Left cardiac atrium (tissue), 4 donors: ENCODE measurements at regions of chr4 and their contacts with region 1.

Region 1: DNA sequence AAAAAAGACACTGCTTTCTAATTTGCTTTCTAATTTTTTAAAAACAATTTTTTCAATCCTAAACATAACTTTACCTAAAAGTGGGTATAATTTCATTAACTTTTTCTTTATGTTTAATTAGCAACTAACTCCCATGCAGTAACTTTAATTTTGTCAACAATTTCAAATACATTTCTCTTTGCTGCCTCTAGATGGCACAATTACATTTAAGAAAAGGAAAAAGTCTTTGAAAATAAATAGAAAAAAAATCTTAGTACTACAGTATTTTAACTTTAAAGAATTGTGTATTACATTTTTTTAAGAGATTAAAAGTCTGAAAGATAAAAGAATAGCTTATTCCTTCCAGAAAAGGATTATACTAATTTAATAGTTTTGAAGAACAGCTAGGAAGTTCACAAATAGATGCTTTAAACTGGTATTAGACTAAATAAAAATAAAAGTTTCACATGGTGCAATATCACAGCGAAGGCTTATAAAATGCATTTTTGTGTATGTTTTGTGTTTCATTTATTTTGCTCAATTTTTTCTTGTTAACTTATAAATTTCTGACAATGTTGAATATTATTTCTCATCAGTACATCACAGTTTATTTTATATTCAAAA is 105.1 kb downstream of the ADGRA3 start:
- DNase-seq: no peak
- ATAC-seq: no peak

Region 2: GRCh38 chr4:22372986-22373385 is 37.8 kb before region 1 on chr4:
- intact Hi-C with region 1: no loop called
- DNase-seq: no peak
- ATAC-seq: no peak

Region 3: DNA sequence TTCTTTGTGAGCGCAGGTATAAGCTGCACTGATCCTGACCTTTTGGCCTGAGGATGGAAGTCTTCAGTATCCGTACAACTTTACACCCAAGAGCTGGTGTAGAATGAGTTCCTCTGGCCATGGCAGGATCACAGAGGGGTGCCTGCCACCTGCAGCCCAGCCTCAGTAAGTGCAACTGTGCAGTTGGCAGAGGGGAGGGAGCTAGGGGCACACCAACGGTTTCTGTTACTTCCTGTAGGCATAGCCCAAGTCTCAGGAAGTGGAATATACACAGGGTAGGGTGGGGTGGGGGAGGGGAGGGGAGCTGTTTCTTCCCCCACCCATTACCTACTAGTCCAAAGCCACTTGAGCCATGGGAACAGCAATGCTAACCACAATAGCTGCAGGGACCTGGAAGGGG is 196.6 kb after region 1 on chr4:
- intact Hi-C with region 1: loop called (anchors 2 to 10 kb)
- DNase-seq: peak; percentile 27
- ATAC-seq: peak; percentile 92 to 98